ENCODE measurements at regions of chr5 and their contacts with region 1.

Region 1: DNA sequence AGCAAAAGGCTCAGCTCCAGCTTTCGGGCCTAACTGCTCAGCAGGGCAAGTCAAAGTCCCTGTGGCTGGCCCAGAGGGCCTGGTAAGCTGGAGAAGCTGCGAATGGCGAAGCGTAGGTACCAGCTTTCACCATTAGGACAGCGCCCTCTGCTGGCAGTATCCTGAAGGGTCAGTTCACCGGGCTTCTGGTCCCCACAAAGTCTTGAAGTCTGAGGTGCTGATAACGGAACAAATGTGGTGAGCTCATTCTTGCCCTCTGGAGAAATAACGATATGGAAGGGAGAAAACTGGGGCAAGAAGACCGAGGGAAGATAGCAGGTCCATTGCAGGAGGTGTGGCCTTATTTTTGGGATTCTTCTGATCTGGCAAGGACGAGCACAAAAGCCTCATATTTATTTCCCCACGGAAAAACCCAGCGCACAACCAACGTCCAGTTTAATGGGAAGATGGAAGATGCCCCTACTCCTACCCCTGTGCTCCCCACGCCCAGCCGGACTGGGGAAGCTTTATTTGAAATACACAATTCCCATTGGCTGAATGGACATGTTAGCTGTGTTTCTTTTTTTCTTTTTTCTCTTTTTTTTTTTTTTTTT is 7.2 kb downstream of the SOWAHA start:
- DNase-seq: no peak
- H3K4me3 ChIP-seq: no peak overlapping the region
- H3K27me3 ChIP-seq: no peaks in the 10 kb centered on the region
- CTCF ChIP-seq: peak; percentile 87

Region 2: DNA sequence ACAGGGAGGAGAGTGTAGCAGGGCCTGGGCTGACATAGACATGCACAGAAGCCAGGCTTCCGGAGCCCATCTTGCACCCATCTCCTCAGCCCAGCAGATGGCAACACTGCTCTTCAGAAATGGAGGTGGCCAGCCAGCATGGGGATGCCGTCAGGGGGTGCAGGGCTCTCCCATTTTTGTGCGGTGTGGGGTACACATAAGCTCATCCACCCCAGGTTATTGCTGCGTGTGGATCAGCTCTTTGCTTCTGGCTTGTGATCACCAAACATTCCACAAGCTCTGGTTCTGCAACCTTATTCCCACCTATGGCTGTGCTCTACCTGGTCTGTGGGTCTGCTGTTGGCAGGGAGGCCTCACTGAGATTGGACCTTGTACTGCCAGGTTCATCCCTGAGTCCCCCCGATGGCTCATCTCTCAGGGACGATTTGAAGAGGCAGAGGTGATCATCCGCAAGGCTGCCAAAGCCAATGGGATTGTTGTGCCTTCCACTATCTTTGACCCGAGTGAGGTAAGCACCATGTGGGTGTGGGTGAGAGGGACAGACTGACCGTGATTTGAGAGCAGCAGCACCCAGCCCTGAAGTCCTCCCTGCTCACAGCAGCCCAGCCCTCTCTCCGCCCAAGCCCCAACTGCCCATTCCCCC is 433.5 kb before region 1 on chr5:
- CTCF ChIA-PET with region 1: interaction called, 10 read pairs
- POLR2A ChIA-PET with region 1: no interaction called
- DNase-seq: no peak
- H3K4me3 ChIP-seq: no peak overlapping the region
- H3K27me3 ChIP-seq: no peaks in the 10 kb centered on the region
- CTCF ChIP-seq: peak; percentile 87

Region 3: GRCh38 chr5:132753135-132753987 is 66.9 kb before region 1 on chr5:
- CTCF ChIA-PET with region 1: interaction called, 102 read pairs
- POLR2A ChIA-PET with region 1: interaction called, 3 read pairs
- DNase-seq: no peak
- H3K4me3 ChIP-seq: no peak overlapping the region
- H3K27me3 ChIP-seq: no peaks in the 10 kb centered on the region
- CTCF ChIP-seq: 0 out of 2 replicates have a peak, but pooled peaks have one; percentile 14

Region 4: GRCh38 chr5:132782101-132782500 is 38.2 kb before region 1 on chr5:
- CTCF ChIA-PET with region 1: interaction called, 12 read pairs
- POLR2A ChIA-PET with region 1: no interaction called
- DNase-seq: no peak
- H3K4me3 ChIP-seq: no peak overlapping the region
- H3K27me3 ChIP-seq: no peaks in the 10 kb centered on the region
- CTCF ChIP-seq: no peak

Region 5: DNA sequence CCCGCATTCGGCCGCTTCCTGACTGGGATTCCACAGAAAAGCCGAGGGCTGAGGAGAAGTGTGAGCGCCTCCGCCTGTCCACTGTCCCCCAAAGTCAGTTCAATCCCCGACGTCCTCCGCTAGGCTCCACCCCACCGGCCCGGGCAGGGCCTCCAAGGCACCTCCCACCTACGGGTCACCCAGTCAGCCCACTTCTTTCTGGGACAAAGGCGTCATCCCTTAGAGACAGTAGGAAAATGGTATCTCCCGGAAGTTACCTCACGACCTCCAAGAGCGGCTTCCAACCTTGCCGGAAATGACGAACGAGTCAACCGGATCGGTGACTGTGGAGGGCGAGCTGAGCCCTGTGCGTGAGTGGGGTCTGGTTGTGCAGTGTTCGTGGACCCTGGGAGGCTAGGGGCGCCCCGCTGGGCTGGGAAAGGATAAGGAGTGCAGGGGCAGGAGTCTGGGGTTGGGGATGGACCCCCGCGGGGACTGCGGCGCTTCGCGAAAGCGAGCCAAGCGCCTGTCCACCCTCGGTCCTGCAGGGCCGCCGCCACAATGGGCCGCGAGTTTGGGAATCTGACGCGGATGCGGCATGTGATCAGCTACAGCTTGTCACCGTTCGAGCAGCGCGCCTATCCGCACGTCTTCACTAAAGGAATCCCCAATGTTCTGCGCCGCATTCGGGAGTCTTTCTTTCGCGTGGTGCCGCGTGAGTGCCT is 46.2 kb after region 1 on chr5 and contains the starts of genes GDF9 and UQCRQ:
- CTCF ChIA-PET with region 1: interaction called, 12 read pairs
- POLR2A ChIA-PET with region 1: no interaction called
- DNase-seq: peak; percentile 97
- H3K4me3 ChIP-seq: peak within 1 kb of the TSS; percentile 79
- H3K27me3 ChIP-seq: no peaks in the 10 kb centered on the region; the same call in 1 of the 2 replicates
- CTCF ChIP-seq: peak; percentile 47
- polyA plus RNA-seq, gene GDF9: 0.15 and 0.20 TPM in 2 replicates
- polyA plus RNA-seq, gene UQCRQ: 289 and 292 TPM in 2 replicates

Region 6: GRCh38 chr5:132998556-132998955 is 178.3 kb after region 1 on chr5:
- CTCF ChIA-PET with region 1: no interaction called
- POLR2A ChIA-PET with region 1: no interaction called
- DNase-seq: no peak
- H3K4me3 ChIP-seq: no peak overlapping the region
- H3K27me3 ChIP-seq: no peaks in the 10 kb centered on the region
- CTCF ChIP-seq: no peak